A673 (cell line): ENCODE measurements at regions of chr1 and their contacts with region 1.

Region 1: DNA sequence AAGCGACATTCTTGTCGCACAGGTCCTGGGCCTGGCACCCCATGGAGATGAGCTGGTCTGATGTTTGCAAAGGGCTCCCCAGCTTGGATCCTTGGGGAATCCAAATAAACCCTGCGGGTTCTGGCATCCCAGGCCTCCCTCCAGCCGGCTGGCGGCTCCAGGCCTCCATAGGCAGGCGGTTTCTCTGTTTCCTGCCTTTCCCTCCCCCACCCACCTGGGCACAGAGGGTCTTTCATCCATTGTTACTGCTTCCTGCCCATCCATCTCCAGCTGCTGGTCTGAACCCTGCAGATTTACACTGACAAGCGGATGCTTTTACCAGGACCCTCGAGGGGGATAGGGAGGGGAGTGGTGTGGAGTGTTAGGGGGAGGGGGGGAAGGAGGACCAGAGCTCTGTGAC is 39.1 kb upstream of the ID3 start:
- DNase-seq: peak; percentile 91
- H3K4me3 ChIP-seq: no peak overlapping the region
- H3K27ac ChIP-seq: peak overlapping the region; percentile 60
- H3K4me1 ChIP-seq: peaks cover 31% of the 10 kb centered on the region
- H3K27me3 ChIP-seq: no peaks in the 10 kb centered on the region
- CTCF ChIP-seq: no peak

Region 2: GRCh38 chr1:23559136-23559984 is 39.1 kb before region 1 on chr1 and contains the start of gene ID3:
- CTCF ChIA-PET with region 1: no interaction called
- POLR2A ChIA-PET with region 1: interaction called, 11 read pairs
- intact Hi-C with region 1: loop called (anchors 5 kb)
- DNase-seq: peak; percentile 99
- H3K4me3 ChIP-seq: peak within 1 kb of the TSS; percentile 75
- H3K27ac ChIP-seq: peak within 1 kb of the TSS; percentile 99
- H3K4me1 ChIP-seq: peaks cover 70% of the 10 kb centered on the region
- H3K27me3 ChIP-seq: no peaks in the 10 kb centered on the region
- CTCF ChIP-seq: no peak
- total RNA-seq, gene ID3: 102 and 140 TPM in 2 replicates